ENCODE measurements at regions of chr12 and their contacts with region 1.

Region 1: DNA sequence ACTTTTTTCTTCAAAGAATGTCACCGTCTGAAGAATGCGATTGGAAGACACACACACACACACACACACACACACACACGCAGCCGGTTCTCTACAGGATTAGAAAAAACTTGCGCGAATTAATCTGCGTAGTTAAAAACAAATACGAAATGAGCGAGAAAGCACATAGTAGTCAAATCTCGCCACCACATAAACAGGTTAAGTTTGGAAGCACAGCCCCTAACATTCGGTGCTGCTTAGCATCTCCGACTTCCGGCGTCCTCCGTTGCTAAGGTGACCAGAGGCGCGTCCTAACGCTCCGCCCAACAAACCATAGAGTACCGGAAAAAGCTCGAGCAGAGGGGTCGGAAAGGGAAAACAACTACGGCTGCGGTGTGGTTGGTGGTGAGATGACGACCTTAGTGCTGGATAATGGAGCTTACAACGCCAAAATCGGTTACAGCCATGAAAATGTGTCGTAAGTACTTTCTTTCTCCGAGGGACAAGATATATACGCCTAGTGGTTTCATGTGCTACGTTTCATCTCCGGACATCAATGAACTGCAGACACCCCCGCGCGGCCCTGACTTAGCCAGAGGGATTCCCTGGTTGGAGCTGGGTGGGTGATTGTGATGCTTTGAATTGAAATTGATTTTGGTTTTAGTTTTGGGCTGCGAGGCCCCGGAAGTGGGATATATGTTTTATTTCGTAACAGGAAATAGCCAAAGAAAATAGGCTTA is at the start of gene ACTR6:
- DNase-seq: peak; percentile 99
- H3K4me3 Mint-ChIP-seq: peak within 1 kb of the TSS; percentile 97
- H3K27ac Mint-ChIP-seq: peak within 1 kb of the TSS; percentile 100
- H3K4me1 Mint-ChIP-seq: peaks cover 26% of the 10 kb centered on the region
- H3K27me3 Mint-ChIP-seq: no peaks in the 10 kb centered on the region
- total RNA-seq, gene ACTR6: 33.7 and 37.4 TPM in 2 replicates

Region 2: DNA sequence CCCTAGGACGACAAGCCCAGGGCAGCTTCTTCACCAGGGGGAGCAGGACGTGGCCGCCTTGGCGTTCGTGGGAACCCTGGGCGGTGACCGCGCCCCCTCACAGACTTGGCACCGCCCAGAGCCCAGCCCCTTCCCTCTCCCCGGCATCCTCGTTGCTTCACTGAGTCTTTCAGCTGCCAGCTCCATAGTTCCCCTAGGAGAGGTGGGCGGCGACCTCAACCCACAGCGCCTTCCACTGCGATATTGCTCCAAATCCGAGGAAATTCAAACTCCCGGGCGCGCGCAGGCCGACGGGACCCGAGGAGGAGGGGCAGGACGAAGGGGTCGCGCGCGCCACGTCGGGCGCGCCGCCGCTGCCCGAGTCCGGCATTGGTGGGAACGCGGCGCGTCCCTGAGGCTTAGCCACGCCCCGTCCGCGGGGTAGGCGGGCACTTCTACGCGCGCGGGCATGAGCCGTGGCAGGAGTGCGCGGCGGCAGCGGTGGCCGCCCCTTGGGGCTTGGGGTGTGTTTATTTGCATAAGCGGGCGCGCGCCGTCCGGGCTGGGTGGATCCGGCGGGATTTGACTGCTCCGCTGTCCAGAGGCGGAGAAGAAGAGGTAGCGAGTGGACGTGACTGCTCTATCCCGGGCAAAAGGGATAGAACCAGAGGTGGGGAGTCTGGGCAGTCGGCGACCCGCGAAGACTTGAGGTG is 1555.8 kb before region 1 on chr12 and contains the starts of genes APAF1 and IKBIP:
- intact Hi-C with region 1: loop called (anchors 10 kb)
- DNase-seq: peak; percentile 99
- H3K4me3 Mint-ChIP-seq: peak within 1 kb of the TSS; percentile 92
- H3K27ac Mint-ChIP-seq: peak within 1 kb of the TSS; percentile 95
- H3K4me1 Mint-ChIP-seq: peaks cover 21% of the 10 kb centered on the region
- H3K27me3 Mint-ChIP-seq: no peaks in the 10 kb centered on the region
- total RNA-seq, gene APAF1: 19.9 and 20.7 TPM in 2 replicates
- total RNA-seq, gene IKBIP: 35.0 and 36.9 TPM in 2 replicates

Region 3: DNA sequence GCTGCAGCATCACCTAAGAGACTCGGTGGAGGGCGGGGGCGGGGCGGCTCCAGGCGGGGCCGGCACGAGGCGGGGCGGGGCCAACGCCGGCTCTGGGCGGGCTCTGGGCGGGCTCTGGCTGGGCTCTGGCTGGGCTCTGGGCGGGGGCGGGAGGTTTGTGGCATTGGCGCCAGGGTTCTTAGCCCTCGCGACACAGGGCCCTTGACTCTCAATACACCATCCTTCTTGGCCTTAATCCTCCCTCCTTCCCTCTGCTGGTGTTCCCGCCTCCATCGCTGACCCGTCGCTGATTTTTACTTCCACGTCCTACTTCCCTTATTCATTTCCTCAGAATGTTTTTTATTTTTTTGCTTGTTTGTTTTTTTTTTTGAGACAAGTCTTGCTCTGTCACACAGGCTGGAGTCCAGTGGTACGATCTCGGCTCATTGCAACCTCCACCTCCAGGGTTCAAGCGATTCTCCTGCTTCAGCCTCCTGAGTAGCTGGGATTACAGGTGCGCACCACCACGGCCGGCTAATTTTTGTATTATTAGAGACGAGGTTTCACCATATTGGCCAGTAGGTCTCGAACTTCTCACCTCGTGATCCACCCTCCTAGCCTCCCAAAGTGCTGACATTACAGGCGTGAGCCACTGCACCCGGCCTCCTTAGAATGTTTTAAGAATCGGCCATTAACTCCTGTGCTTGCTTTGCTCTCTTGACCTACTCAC is 57.6 kb before region 1 on chr12 and contains the start of gene BLTP3B:
- intact Hi-C with region 1: loop called (anchors 1 kb)
- DNase-seq: peak; percentile 96
- H3K4me3 Mint-ChIP-seq: peak within 1 kb of the TSS; percentile 93
- H3K27ac Mint-ChIP-seq: peak within 1 kb of the TSS; percentile 99
- H3K4me1 Mint-ChIP-seq: peaks cover 39% of the 10 kb centered on the region
- H3K27me3 Mint-ChIP-seq: no peaks in the 10 kb centered on the region
- total RNA-seq, gene BLTP3B: 57.6 and 63.6 TPM in 2 replicates

Region 4: GRCh38 chr12:100154474-100155247 is 46.0 kb before region 1 on chr12:
- intact Hi-C with region 1: loop called (anchors 1 kb)
- DNase-seq: peak; percentile 93
- H3K4me3 Mint-ChIP-seq: no peak overlapping the region
- H3K27ac Mint-ChIP-seq: peak overlapping the region; percentile 30
- H3K4me1 Mint-ChIP-seq: peaks cover 8% of the 10 kb centered on the region
- H3K27me3 Mint-ChIP-seq: no peaks in the 10 kb centered on the region

Region 5: DNA sequence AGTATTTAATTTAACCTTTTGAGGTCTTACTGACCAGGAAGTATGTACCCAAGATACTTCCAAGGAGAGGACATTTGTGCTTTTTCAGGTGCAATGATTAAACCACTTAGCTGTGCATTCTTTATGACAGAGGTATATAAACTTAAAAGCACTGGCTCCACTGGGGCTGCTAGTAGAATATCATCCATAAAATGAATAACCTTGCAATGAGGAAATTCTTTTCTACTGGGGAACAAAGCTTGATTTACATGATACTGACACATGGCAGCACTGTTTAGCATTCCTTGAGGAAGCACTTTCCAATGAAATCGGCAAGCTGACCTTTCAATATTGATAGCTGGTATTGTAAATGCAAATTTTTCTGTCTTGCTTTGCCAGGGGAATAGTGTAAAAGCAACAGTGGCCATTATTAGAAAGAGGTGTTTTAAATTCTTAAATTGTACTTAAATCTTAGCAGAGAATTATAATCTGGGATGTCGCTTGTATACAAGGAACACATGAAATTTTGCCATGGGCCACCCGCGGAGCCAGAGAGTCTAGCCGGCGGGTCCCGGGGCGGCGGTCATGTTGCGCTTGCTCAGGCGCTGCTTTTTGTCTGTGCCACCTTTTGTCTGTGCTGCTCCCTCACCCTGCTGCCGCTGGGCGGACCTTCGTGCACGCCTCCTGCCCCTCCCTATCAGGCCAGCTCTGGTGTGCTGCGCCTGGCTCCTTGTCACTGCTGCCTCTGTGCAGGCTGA is 37.0 kb before region 1 on chr12:
- intact Hi-C with region 1: loop called (anchors 1 kb)
- DNase-seq: peak; percentile 90
- H3K4me3 Mint-ChIP-seq: peak overlapping the region; percentile 64
- H3K27ac Mint-ChIP-seq: no peak overlapping the region
- H3K4me1 Mint-ChIP-seq: peaks cover 11% of the 10 kb centered on the region
- H3K27me3 Mint-ChIP-seq: no peaks in the 10 kb centered on the region

Region 6: GRCh38 chr12:100185361-100185894 is 15.2 kb before region 1 on chr12:
- intact Hi-C with region 1: loop called (anchors 1 kb)
- DNase-seq: peak; percentile 67
- H3K4me3 Mint-ChIP-seq: no peak overlapping the region
- H3K27ac Mint-ChIP-seq: peak overlapping the region; percentile 69
- H3K4me1 Mint-ChIP-seq: peaks cover 37% of the 10 kb centered on the region
- H3K27me3 Mint-ChIP-seq: no peaks in the 10 kb centered on the region

Region 7: GRCh38 chr12:100266835-100267618 is 66.4 kb after region 1 on chr12 and contains the starts of genes DEPDC4 and SCYL2:
- intact Hi-C with region 1: loop called (anchors 1 kb)
- DNase-seq: peak; percentile 97
- H3K4me3 Mint-ChIP-seq: peak within 1 kb of the TSS; percentile 98
- H3K27ac Mint-ChIP-seq: peak within 1 kb of the TSS; percentile 99
- H3K4me1 Mint-ChIP-seq: peaks cover 22% of the 10 kb centered on the region
- H3K27me3 Mint-ChIP-seq: no peaks in the 10 kb centered on the region
- total RNA-seq, gene DEPDC4: 1.3 and 2.9 TPM in 2 replicates
- total RNA-seq, gene SCYL2: 31.1 and 34.8 TPM in 2 replicates

Region 8: GRCh38 chr12:100672075-100672592 is 471.5 kb after region 1 on chr12:
- intact Hi-C with region 1: no loop called
- DNase-seq: peak; percentile 76
- H3K4me3 Mint-ChIP-seq: no peak overlapping the region
- H3K27ac Mint-ChIP-seq: no peak overlapping the region
- H3K4me1 Mint-ChIP-seq: no peaks in the 10 kb centered on the region
- H3K27me3 Mint-ChIP-seq: no peaks in the 10 kb centered on the region